MCF 10A (cell line): ENCODE measurements at regions of chr15 and their contacts with region 1.

Region 1: GRCh38 chr15:32657198-32657883 is 15.8 kb downstream of the SCG5 start:
- DNase-seq: peak; percentile 38
- H3K4me3 Mint-ChIP-seq: peak overlapping the region; percentile 51
- H3K27ac Mint-ChIP-seq: peak overlapping the region; percentile 39
- H3K4me1 Mint-ChIP-seq: peaks cover 28% of the 10 kb centered on the region
- H3K27me3 Mint-ChIP-seq: no peaks in the 10 kb centered on the region
- CTCF ChIP-seq: peak; percentile 6

Region 2: GRCh38 chr15:32669896-32670619 is 12.7 kb after region 1 on chr15:
- CTCF ChIA-PET with region 1: interaction called, 11 read pairs
- POLR2A ChIA-PET with region 1: interaction called, 3 read pairs
- intact Hi-C with region 1: no loop called
- DNase-seq: peak; percentile 69
- H3K4me3 Mint-ChIP-seq: no peak overlapping the region
- H3K27ac Mint-ChIP-seq: no peak overlapping the region
- H3K4me1 Mint-ChIP-seq: peaks cover 8% of the 10 kb centered on the region
- H3K27me3 Mint-ChIP-seq: no peaks in the 10 kb centered on the region
- CTCF ChIP-seq: no peak

Region 3: GRCh38 chr15:32824777-32825176 is 167.4 kb after region 1 on chr15:
- CTCF ChIA-PET with region 1: interaction called, 12 read pairs
- POLR2A ChIA-PET with region 1: no interaction called
- intact Hi-C with region 1: loop called (anchors 1 kb)
- DNase-seq: peak; percentile 67
- H3K4me3 Mint-ChIP-seq: peak overlapping the region; percentile 0
- H3K27ac Mint-ChIP-seq: peak overlapping the region; percentile 21
- H3K4me1 Mint-ChIP-seq: peaks cover 16% of the 10 kb centered on the region
- H3K27me3 Mint-ChIP-seq: no peaks in the 10 kb centered on the region
- CTCF ChIP-seq: no peak

Region 4: DNA sequence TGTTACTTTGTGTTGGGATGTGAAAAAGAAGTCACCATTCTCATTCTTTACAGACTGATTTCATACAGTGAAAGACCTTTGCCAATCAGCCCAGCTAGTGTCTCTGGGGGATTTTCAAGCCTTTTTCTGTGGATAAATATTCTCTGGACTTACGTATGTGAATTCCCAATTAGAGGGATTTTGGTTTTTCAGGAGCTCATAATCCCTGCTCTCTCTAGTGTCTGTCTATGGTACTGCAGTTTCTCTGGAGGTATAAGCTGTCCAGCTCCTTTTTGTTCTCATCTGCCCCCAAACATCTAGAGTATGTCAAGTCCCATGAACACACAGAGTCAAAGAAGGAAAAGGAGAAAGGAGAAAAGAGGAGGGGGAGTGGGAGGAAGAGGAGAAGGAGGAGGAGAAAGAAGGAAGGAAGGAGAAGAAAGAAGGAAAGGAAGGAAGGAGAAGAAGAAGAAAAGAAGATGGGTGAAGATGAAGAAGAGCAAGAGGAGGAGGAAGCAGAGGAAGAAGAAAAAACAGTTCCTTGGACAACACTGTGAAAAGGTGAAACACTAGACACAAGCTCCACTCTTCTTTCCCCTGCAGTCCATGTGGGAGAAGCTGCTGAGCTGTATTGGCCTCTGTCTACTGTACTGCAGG is 279.1 kb after region 1 on chr15:
- CTCF ChIA-PET with region 1: interaction called, 79 read pairs
- POLR2A ChIA-PET with region 1: interaction called, 3 read pairs
- intact Hi-C with region 1: loop called (anchors 1 kb)
- DNase-seq: peak; percentile 48
- H3K4me3 Mint-ChIP-seq: no peak overlapping the region
- H3K27ac Mint-ChIP-seq: peak overlapping the region; percentile 7
- H3K4me1 Mint-ChIP-seq: peaks cover 5% of the 10 kb centered on the region
- H3K27me3 Mint-ChIP-seq: peaks cover 11% of the 10 kb centered on the region
- CTCF ChIP-seq: peak; percentile 73

Region 5: DNA sequence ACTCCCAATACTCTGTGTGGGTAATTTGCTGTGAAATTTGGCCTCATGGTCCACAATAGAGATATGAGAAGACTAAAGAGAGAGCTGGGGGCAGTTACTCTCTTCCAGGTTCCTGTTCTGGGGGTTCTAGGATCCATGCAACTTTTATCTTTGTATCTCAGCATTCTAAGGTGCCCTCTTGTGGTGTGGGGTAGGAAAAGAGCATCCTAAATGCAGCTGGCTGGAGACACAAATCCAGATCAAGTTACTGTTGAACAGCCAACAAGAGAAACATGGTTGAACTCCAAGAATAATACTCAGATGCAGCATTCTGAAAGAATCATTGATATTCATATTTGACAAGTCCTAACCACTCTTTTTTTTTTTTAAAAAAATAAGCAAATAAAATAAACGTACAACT is 298.7 kb after region 1 on chr15:
- CTCF ChIA-PET with region 1: interaction called, 151 read pairs
- POLR2A ChIA-PET with region 1: no interaction called
- intact Hi-C with region 1: loop called (anchors 1 kb)
- DNase-seq: peak; percentile 60
- H3K4me3 Mint-ChIP-seq: no peak overlapping the region
- H3K27ac Mint-ChIP-seq: no peak overlapping the region
- H3K4me1 Mint-ChIP-seq: peaks cover 8% of the 10 kb centered on the region
- H3K27me3 Mint-ChIP-seq: no peaks in the 10 kb centered on the region
- CTCF ChIP-seq: peak; percentile 38

Region 6: GRCh38 chr15:32994810-32995424 is 337.6 kb after region 1 on chr15:
- CTCF ChIA-PET with region 1: interaction called, 89 read pairs
- POLR2A ChIA-PET with region 1: interaction called, 4 read pairs
- intact Hi-C with region 1: loop called (anchors 1 kb)
- DNase-seq: peak; percentile 52
- H3K4me3 Mint-ChIP-seq: no peak overlapping the region
- H3K27ac Mint-ChIP-seq: no peak overlapping the region
- H3K4me1 Mint-ChIP-seq: no peaks in the 10 kb centered on the region
- H3K27me3 Mint-ChIP-seq: no peaks in the 10 kb centered on the region
- CTCF ChIP-seq: peak; percentile 47